Right ventricle myocardium superior (tissue), 1 donor: ENCODE measurements at regions of chr11 and their contacts with region 1.

Region 1: GRCh38 chr11:57345555-57346211 is 7.5 kb downstream of the P2RX3 start:
- DNase-seq: peak; percentile 64
- ATAC-seq: peak; percentile 89

Region 2: GRCh38 chr11:56841210-56841810 is 504.4 kb before region 1 on chr11:
- intact Hi-C with region 1: loop called (anchors 5 kb)
- DNase-seq: no peak
- ATAC-seq: peak; percentile 60

Region 3: GRCh38 chr11:57527056-57527631 is 181.5 kb after region 1 on chr11:
- intact Hi-C with region 1: loop called (anchors 10 kb)
- DNase-seq: peak; percentile 78
- ATAC-seq: peak; percentile 36

Region 4: GRCh38 chr11:57644748-57645688 is 299.3 kb after region 1 on chr11:
- intact Hi-C with region 1: loop called (anchors 5 kb)
- DNase-seq: peak; percentile 85
- ATAC-seq: peak; percentile 85